ENCODE measurements at regions of chr13 and their contacts with region 1.

Region 1: DNA sequence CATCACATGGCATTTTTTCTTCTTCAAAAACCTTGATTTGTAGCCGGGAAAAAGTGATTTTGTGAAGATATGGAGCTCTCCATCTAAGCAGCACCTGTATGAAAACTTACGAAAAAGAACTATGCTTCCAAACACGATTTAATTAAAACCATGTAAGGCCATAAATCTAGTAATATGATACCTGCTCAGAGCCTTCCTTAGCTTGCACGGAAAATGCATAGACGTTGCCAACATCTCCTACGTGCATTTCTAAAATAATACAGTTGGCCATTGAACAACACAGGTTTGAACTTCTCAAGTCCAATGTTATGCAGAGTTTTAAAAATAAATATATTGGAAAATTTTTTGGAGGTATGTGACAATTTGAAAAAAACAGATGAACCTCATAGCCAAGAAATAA is 59.1 kb upstream of the RNF113B start:
- DNase-seq: no peak
- H3K4me3 ChIP-seq: no peak overlapping the region
- CTCF ChIP-seq: no peak

Region 2: GRCh38 chr13:98072476-98072875 is 163.7 kb before region 1 on chr13:
- CTCF ChIA-PET with region 1: no interaction called
- POLR2A ChIA-PET with region 1: no interaction called
- DNase-seq: no peak
- H3K4me3 ChIP-seq: no peak overlapping the region
- CTCF ChIP-seq: no peak

Region 3: GRCh38 chr13:98105929-98106336 is 130.3 kb before region 1 on chr13:
- CTCF ChIA-PET with region 1: no interaction called
- POLR2A ChIA-PET with region 1: no interaction called
- DNase-seq: no peak
- H3K4me3 ChIP-seq: no peak overlapping the region
- CTCF ChIP-seq: no peak

Region 4: GRCh38 chr13:98214707-98215106 is 21.5 kb before region 1 on chr13:
- CTCF ChIA-PET with region 1: no interaction called
- POLR2A ChIA-PET with region 1: no interaction called
- DNase-seq: no peak
- H3K4me3 ChIP-seq: no peak overlapping the region
- CTCF ChIP-seq: no peak

Region 5: GRCh38 chr13:98246538-98247172 is 10.5 kb after region 1 on chr13:
- CTCF ChIA-PET with region 1: interaction called, 16 read pairs
- POLR2A ChIA-PET with region 1: no interaction called
- DNase-seq: no peak
- H3K4me3 ChIP-seq: no peak overlapping the region
- CTCF ChIP-seq: no peak

Region 6: GRCh38 chr13:98416345-98416845 is 180.2 kb after region 1 on chr13:
- CTCF ChIA-PET with region 1: no interaction called
- POLR2A ChIA-PET with region 1: no interaction called
- DNase-seq: no peak
- H3K4me3 ChIP-seq: no peak overlapping the region
- CTCF ChIP-seq: no peak

Measured in AG04449 (cell line).